ENCODE measurements at regions of chr6 and their contacts with region 1.

Region 1: GRCh38 chr6:42901536-42901957 is 14.3 kb upstream of the PTCRA start:
- DNase-seq: peak; percentile 82 to 91 (median 84)
- ATAC-seq: peak; percentile 94 to 99 (median 98)
- H3K4me3 ChIP-seq: peak overlapping the region in 2 of 12 donors; percentile 9 to 12
- H3K27ac ChIP-seq: peak overlapping the region in 10 of 12 donors; percentile 15 to 69 (median 48)
- H3K4me1 ChIP-seq: peaks cover 0 to 24% (median 6%) of the 10 kb centered on the region in 12 donors
- H3K27me3 ChIP-seq: no peaks in the 10 kb centered on the region
- CTCF ChIP-seq: peak; percentile 86 to 95 (median 90)
- POLR2A ChIP-seq: no peak

Region 2: DNA sequence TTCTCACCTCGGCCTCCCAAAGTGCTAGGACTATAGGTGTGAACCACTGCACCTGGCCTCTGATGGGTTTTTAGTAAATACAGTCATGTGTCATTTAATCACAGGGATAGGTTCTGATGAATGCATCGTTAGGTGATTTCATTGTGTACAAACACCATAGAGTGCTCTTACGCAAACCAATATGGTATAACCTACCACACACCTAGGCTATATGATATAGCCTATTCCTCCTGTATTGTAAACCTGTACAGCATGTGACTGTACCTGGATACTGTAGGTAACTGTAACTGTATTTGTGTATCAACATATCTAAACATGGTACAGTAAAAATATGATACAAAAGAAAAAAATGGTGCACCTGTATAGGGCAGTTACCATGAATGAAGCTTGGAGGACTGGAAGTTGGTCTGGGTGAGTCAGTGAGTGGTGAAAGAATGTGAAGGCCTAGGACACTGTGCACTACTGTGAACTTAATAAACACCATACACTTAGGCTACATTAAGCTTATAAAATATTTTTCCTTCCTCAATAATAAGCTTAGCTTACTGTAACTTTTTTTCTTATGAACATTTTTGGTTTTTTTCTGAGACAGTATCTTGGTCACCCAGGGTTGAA is 109.7 kb before region 1 on chr6:
- intact Hi-C with region 1: no loop called
- DNase-seq: no peak
- ATAC-seq: peak in 2 of 4 donors; percentile 25 to 39
- H3K4me3 ChIP-seq: no peak overlapping the region
- H3K27ac ChIP-seq: no peak overlapping the region
- H3K4me1 ChIP-seq: peaks cover 0 to 46% (median 35%) of the 10 kb centered on the region in 12 donors
- H3K27me3 ChIP-seq: no peaks in the 10 kb centered on the region
- CTCF ChIP-seq: no peak
- POLR2A ChIP-seq: no peak

Region 3: GRCh38 chr6:42831237-42831636 is 70.3 kb before region 1 on chr6:
- intact Hi-C with region 1: no loop called
- DNase-seq: no peak
- ATAC-seq: no peak
- H3K4me3 ChIP-seq: no peak overlapping the region
- H3K27ac ChIP-seq: no peak overlapping the region
- H3K4me1 ChIP-seq: no peaks in the 10 kb centered on the region
- H3K27me3 ChIP-seq: no peaks in the 10 kb centered on the region
- CTCF ChIP-seq: no peak
- POLR2A ChIP-seq: no peak

Region 4: GRCh38 chr6:42978839-42979522 is 77.4 kb after region 1 on chr6 and contains the start of gene PEX6:
- intact Hi-C with region 1: loop called in 2 of 10 experiments (anchors 10 kb)
- DNase-seq: peak; percentile 90 to 96 (median 94)
- ATAC-seq: peak; percentile 93 to 97 (median 96)
- H3K4me3 ChIP-seq: peak within 1 kb of the TSS; percentile 61 to 99 (median 88)
- H3K27ac ChIP-seq: peak within 1 kb of the TSS; percentile 27 to 95 (median 91)
- H3K4me1 ChIP-seq: peaks cover 0 to 41% (median 28%) of the 10 kb centered on the region in 12 donors
- H3K27me3 ChIP-seq: no peaks in the 10 kb centered on the region
- CTCF ChIP-seq: no peak
- POLR2A ChIP-seq: peak in 1 of 2 donors; percentile 52
- total RNA-seq, gene PEX6: 11.2 to 27.3 (median 19.6) TPM

Region 5: DNA sequence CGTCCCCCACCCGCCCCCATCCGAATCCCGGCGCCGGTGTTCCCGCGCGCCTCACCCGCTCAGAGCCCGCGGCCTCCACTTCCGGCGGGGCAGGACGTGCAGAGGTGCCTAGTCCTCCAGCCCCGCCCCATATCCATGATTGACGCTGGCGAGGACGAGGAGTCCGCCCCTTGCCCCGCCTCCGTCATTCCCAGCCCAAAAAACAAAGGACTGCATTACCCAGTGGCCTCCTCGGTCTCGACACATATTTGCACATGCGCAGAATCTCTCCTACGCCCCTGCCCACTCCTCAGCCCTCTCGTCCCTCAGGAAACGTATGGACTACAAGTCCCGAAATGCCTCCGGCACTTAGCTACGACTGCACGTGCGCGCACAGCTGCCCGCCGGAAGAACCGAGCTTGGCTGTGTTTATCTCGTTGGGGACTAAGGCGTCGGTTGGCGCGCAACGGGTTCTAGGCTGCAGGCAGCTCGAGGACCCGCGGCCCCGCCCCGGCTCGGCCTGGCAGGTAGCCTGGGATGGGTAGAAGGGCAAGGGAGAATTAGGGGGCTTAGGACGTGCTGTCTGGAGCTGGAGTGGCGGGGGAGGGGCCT is 112.4 kb after region 1 on chr6 and contains the starts of genes KLHDC3 and MEA1:
- intact Hi-C with region 1: loop called in 2 of 10 experiments (anchors 2 to 10 kb)
- DNase-seq: peak; percentile 99
- ATAC-seq: peak; percentile 92 to 96 (median 94)
- H3K4me3 ChIP-seq: peak within 1 kb of the TSS; percentile 51 to 90 (median 74)
- H3K27ac ChIP-seq: peak within 1 kb of the TSS; percentile 25 to 97 (median 84)
- H3K4me1 ChIP-seq: peaks cover 4 to 57% (median 47%) of the 10 kb centered on the region in 12 donors
- H3K27me3 ChIP-seq: no peaks in the 10 kb centered on the region
- CTCF ChIP-seq: no peak
- POLR2A ChIP-seq: peak; percentile 22 to 65
- total RNA-seq, gene KLHDC3: 79.4 to 180 (median 102) TPM
- total RNA-seq, gene MEA1: 24.5 to 46.2 (median 32.1) TPM

Region 6: DNA sequence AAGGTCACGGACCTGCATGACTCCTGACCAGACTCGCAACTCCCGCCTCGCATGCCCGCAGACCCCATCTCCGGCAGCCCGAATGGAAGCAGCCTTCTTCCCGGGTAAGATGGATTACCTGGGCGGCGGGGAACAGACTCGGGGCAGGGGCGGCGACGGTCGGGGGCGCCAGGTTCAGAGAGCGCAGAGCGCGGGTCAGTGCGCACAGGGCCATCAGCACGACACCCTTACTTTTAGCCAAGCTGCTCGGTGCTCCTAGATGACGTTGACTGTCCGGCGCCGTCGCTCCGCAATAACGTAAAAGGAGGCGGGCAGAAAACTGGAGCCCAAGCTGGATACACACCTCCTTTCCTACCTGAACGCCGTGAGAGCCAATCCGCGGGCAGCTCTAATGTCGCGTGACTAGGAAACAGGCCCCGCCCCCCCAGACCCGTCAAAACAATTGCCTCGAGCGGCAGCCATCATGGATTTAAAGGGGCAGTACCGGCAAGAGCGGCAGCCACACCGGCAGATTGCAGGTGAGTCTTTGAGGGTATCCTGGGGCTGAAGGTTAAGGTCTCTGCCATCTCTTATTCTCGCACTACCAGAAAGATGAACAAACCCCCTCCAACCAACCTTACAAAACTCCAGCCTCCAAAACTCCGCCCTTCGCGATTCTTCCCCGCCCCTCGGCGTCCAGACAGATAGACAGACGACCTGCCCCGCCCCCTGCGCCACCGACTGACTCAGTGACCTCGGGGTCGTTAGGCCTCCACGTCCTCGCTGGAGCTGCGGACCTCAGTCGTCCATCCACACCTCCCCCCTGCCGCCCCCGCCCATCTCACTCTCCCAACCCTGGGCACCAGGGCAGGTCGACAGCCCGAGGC is 157.9 kb after region 1 on chr6 and contains the starts of genes KLC4 and MRPL2:
- intact Hi-C with region 1: loop called in 3 of 10 experiments (anchors 5 to 10 kb)
- DNase-seq: peak; percentile 97 to 99 (median 98)
- ATAC-seq: peak; percentile 96 to 99 (median 98)
- H3K4me3 ChIP-seq: peak within 1 kb of the TSS; percentile 69 to 96 (median 84)
- H3K27ac ChIP-seq: peak within 1 kb of the TSS; percentile 67 to 98 (median 88)
- H3K4me1 ChIP-seq: peaks cover 0 to 41% (median 21%) of the 10 kb centered on the region in 12 donors
- H3K27me3 ChIP-seq: no peaks in the 10 kb centered on the region
- CTCF ChIP-seq: no peak
- POLR2A ChIP-seq: peak in 1 of 2 donors; percentile 69
- total RNA-seq, gene KLC4: 18.8 to 35.4 (median 26.9) TPM
- total RNA-seq, gene MRPL2: 54.0 to 98.5 (median 83.1) TPM

Region 7: DNA sequence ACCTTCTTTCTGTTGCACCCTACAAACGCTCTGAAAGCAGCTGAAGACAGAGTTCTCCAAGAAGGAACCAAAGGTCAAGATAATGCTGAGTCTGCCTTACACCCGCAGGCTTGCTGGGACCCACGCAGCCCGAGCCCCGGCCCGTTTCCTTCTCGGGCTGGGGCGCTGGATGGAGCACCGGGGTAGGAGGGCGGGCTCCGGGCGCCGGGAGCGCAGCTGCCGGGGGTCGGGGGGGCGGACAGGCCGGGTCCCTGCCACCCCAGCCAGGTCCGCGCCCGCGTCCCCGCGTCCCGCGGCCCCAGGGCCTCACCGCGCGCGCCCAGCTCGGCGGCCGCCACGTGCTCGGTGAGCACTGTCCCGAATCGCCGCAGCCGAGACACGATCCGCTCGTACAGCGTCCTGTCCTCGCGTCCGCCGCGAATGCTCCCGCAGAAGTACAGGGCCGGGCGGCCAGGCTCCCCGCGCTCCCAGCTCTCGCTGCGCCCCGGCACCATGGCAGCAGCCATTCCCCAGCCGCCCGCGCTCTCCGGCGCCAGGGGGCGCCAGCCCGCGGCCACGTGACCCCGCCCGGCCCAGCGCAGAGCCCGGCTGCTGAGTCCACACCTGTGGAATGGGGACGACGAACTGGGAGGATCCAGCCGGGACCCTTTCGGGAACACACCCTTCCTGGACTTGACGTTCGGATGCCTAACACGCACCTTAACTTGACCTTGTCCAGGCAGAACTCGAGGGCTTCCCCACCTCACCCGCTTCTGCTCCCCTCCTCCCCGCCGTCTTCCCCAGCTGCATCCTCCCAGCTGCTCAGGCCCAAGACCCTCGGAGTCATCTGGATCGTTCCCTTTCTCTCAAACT is 327.6 kb after region 1 on chr6 and contains the start of gene DNPH1:
- intact Hi-C with region 1: no loop called
- DNase-seq: peak; percentile 73 to 89 (median 80)
- ATAC-seq: peak; percentile 63 to 97 (median 92)
- H3K4me3 ChIP-seq: peak within 1 kb of the TSS; percentile 39 to 79 (median 62)
- H3K27ac ChIP-seq: peak within 1 kb of the TSS in 8 of 12 donors; percentile 17 to 83 (median 53)
- H3K4me1 ChIP-seq: peaks cover 0 to 34% (median 0%) of the 10 kb centered on the region in 12 donors
- H3K27me3 ChIP-seq: no peaks in the 10 kb centered on the region
- CTCF ChIP-seq: peak; percentile 76 to 97 (median 91)
- POLR2A ChIP-seq: peak in 1 of 2 donors; percentile 38
- total RNA-seq, gene DNPH1: 18.9 to 63.7 (median 25.7) TPM

Measured in heart left ventricle (tissue), 16 donors.